ENCODE measurements at regions of chr9 and their contacts with region 1.

Region 1: GRCh38 chr9:111896353-111896958 is at the start of gene UGCG:
- DNase-seq: peak; percentile 94
- ATAC-seq: peak; percentile 88
- H3K4me3 Mint-ChIP-seq: no peak within 1 kb of the TSS
- H3K27ac Mint-ChIP-seq: peak within 1 kb of the TSS; percentile 90
- H3K4me1 Mint-ChIP-seq: peaks cover 25% of the 10 kb centered on the region
- H3K27me3 Mint-ChIP-seq: no peaks in the 10 kb centered on the region
- total RNA-seq, gene UGCG: 12.7 to 14.2 TPM

Region 2: DNA sequence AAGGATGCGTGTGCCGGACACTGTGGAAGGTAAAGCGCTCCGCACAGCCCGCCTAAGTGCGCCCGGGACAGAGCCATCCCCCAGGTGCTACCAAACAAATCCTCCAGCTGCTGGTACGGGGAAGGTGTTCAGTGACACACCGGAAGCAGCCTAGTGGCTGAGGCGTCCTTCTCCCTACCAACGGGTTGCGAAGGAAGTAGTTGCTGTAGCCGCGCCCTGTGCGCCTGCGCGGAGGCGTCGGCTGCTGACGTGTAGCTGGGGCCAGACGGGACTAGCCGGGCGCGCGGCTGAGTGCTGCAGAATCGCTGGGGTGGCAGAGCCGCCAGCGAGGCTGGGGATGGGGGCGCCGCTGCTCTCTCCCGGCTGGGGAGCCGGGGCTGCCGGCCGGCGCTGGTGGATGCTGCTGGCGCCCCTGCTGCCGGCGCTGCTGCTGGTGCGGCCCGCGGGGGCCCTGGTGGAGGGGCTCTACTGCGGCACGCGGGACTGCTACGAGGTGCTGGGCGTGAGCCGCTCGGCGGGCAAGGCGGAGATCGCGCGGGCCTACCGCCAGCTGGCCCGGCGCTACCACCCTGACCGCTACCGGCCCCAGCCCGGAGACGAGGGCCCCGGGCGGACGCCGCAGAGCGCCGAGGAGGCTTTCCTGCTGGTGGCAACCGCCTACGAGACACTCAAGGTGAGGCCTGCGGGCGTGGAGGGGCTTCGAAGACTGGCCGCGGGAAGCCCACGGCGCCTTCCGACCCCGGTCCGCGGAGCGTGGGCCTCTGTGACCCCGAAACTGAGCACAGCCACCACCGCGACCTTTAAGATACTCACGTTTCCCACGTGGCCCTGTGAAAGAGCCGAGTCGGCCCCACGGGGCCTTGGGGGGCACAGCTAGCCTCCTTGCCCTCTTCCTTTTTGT is 265.1 kb before region 1 on chr9 and contains the start of gene DNAJC25:
- CTCF ChIA-PET with region 1: no interaction called
- POLR2A ChIA-PET with region 1: no interaction called
- intact Hi-C with region 1: loop called (anchors 1 kb)
- DNase-seq: peak; percentile 98
- ATAC-seq: peak; percentile 98
- H3K4me3 Mint-ChIP-seq: peak within 1 kb of the TSS; percentile 94
- H3K27ac Mint-ChIP-seq: peak within 1 kb of the TSS; percentile 91
- H3K4me1 Mint-ChIP-seq: peaks cover 47% of the 10 kb centered on the region
- H3K27me3 Mint-ChIP-seq: no peaks in the 10 kb centered on the region
- total RNA-seq, gene DNAJC25: 6.3 to 7.5 TPM

Region 3: DNA sequence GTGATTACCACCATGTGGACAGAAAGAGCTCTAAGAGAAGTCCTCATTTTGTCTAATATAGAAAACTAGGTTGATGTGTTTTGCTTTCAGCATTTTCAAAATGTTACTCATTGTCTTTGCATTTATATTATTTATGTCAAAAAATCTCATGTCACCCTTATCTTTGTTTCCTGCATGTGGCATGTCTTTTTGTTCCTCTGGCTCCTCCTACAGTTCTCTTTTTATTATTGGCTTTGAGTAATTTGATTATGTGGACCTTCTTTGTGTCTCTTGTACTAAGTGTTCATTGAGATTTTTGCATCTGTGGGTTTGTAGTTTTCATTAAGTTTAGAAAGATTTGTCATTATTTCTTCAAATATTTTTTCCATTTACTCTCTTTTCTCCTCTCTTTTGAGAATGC is 176.3 kb before region 1 on chr9:
- CTCF ChIA-PET with region 1: no interaction called
- POLR2A ChIA-PET with region 1: no interaction called
- intact Hi-C with region 1: no loop called
- DNase-seq: no peak
- ATAC-seq: no peak
- H3K4me3 Mint-ChIP-seq: no peak overlapping the region
- H3K27ac Mint-ChIP-seq: no peak overlapping the region
- H3K4me1 Mint-ChIP-seq: no peaks in the 10 kb centered on the region
- H3K27me3 Mint-ChIP-seq: no peaks in the 10 kb centered on the region

Region 4: GRCh38 chr9:111916234-111916645 is 19.8 kb after region 1 on chr9:
- CTCF ChIA-PET with region 1: interaction called, 6 read pairs
- POLR2A ChIA-PET with region 1: interaction called, 9 read pairs
- intact Hi-C with region 1: loop called (anchors 1 kb)
- DNase-seq: peak; percentile 63
- ATAC-seq: peak; percentile 85
- H3K4me3 Mint-ChIP-seq: peak overlapping the region; percentile 39
- H3K27ac Mint-ChIP-seq: peak overlapping the region; percentile 69
- H3K4me1 Mint-ChIP-seq: peaks cover 56% of the 10 kb centered on the region
- H3K27me3 Mint-ChIP-seq: no peaks in the 10 kb centered on the region

Region 5: GRCh38 chr9:112037281-112038016 is 141.0 kb after region 1 on chr9:
- CTCF ChIA-PET with region 1: no interaction called
- POLR2A ChIA-PET with region 1: no interaction called
- intact Hi-C with region 1: loop called in 1 of 2 experiments (anchors 1 kb)
- DNase-seq: peak; percentile 82
- ATAC-seq: peak; percentile 95
- H3K4me3 Mint-ChIP-seq: no peak overlapping the region
- H3K27ac Mint-ChIP-seq: peak overlapping the region; percentile 74
- H3K4me1 Mint-ChIP-seq: peaks cover 64% of the 10 kb centered on the region
- H3K27me3 Mint-ChIP-seq: peaks cover 11% of the 10 kb centered on the region

Region 6: DNA sequence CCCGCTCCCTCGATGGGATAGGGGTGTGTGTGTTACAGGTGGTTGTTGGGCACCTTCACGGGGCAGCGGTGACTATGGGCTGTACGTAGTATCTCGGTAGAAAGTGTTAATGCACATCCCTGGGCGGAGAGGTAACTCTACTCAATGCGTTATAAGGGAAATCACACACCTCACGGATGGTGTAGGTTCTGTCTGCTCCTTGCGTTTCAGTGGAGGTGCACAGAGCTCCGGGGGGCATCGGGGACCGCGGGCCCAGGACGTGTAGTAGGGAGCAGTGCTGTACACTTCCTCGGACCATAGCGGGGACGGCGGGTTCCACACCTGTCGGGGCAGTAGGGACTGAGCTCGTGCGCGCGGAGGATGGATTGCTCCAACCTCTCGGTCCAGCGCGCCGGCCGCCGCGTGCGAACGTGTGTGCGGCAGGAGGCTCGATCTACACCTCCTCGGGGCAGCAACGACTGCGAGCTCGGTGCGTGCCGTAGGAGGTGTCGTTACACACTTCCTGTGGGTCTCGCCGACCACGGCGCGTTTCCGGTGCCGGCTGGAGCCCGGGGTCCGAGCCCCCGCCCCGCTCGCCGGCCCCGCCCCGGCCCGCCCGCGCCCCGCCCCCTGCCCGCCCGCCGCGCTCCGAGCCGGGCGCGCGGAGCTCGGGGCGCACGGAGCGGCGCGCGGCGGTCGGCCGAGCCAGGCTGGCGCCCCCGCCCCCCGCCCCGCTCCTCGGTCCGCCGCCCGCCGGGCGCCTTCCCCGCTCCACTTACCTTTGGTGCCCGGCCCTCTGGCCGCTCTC is 590.0 kb after region 1 on chr9 and contains the start of gene KIAA1958:
- CTCF ChIA-PET with region 1: no interaction called
- POLR2A ChIA-PET with region 1: no interaction called
- intact Hi-C with region 1: loop called in 1 of 2 experiments (anchors 1 kb)
- DNase-seq: peak; percentile 94
- ATAC-seq: peak; percentile 96
- H3K4me3 Mint-ChIP-seq: peak within 1 kb of the TSS; percentile 95
- H3K27ac Mint-ChIP-seq: peak within 1 kb of the TSS; percentile 95
- H3K4me1 Mint-ChIP-seq: peaks cover 37% of the 10 kb centered on the region
- H3K27me3 Mint-ChIP-seq: no peaks in the 10 kb centered on the region
- total RNA-seq, gene KIAA1958: 9.7 to 13.0 TPM

Region 7: DNA sequence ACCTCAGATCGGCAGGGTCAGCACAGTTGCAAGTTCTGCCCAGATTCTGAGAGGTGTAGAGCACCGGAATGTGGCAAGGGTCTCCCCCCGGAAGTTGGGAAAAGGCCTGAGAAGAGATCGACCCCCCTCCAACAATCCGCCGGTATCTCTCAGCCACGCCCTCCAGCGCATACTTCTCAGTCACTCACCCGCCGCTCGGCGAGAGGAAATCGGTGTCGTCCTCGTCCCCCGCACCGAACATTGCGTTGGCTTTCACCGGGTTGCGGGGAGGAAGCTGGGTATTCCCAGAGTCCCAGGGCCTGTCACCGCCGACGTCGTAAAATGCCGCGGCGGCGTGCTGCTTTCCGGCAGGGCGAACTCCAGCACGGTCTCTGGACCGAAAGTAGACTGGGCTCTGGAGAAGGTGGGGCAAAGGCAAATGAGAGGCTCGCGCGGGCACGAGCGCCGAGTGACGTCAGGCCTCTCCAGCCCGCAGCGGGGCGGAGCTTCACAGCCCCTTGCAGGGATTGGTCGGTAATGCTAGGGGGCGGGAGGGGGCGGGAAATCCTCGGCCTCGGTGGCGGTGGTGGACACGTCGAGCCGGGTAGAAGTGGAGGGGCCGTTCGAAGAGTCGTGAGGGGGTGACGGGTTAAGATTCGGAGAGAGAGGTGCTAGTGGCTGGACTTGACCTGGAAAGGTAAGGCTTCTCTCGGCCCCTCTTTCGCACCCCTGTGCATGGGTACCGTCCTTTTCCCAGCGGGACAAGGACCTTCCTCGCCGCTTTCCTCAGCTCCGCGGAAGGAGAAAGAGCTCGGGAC is 1324.7 kb after region 1 on chr9 and contains the starts of genes FKBP15 and SLC31A1:
- CTCF ChIA-PET with region 1: no interaction called
- POLR2A ChIA-PET with region 1: no interaction called
- intact Hi-C with region 1: loop called in 1 of 2 experiments (anchors 5 kb)
- DNase-seq: peak; percentile 98
- ATAC-seq: peak; percentile 97
- H3K4me3 Mint-ChIP-seq: peak within 1 kb of the TSS; percentile 89
- H3K27ac Mint-ChIP-seq: peak within 1 kb of the TSS; percentile 93
- H3K4me1 Mint-ChIP-seq: peaks cover 46% of the 10 kb centered on the region
- H3K27me3 Mint-ChIP-seq: no peaks in the 10 kb centered on the region
- total RNA-seq, gene FKBP15: 34.0 to 44.2 TPM
- total RNA-seq, gene SLC31A1: 14.8 to 18.2 TPM

Measured in activated CD4-positive, alpha-beta T cell treated with anti-CD3 and anti-CD28 coated beads for 36 hours (primary cell).